ENCODE measurements at regions of chr1 and their contacts with region 1.

Region 1: GRCh38 chr1:171485375-171486047 is at the start of gene PRRC2C:
- DNase-seq: peak; percentile 88 to 99
- H3K4me3 ChIP-seq: peak within 1 kb of the TSS; percentile 75 to 91
- H3K27ac ChIP-seq: peak within 1 kb of the TSS; percentile 97 to 100
- H3K4me1 ChIP-seq: peaks cover 3 to 19% of the 10 kb centered on the region in 2 donors
- H3K27me3 ChIP-seq: no peaks in the 10 kb centered on the region
- CTCF ChIP-seq: peak in 2 of 3 experiments; percentile 83 to 89
- total RNA-seq, gene PRRC2C: 46.3 TPM

Region 2: DNA sequence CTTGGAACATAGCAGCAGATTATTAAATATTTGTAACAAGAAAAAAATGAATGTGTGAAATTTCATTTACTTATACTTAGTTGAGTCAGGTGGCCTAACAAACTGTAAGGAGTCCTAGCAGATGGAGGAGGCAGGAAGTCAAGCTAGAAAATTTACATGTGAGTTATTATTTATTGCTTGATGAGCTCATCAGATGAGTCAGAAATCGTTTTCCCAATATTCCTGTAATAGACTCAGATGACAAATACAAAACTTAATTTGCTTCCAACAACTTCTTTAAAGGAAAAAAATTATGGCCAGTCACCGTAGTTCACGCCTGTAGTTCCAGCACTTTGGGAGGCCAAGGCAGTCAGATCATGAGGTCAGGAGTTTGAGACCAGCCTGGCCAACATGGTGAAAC is 44.2 kb before region 1 on chr1:
- intact Hi-C with region 1: loop called (anchors 2 kb)
- DNase-seq: no peak
- H3K4me3 ChIP-seq: no peak overlapping the region
- H3K27ac ChIP-seq: peak overlapping the region in 1 of 2 donors; percentile 55
- H3K4me1 ChIP-seq: peaks cover 0 to 9% of the 10 kb centered on the region in 2 donors
- H3K27me3 ChIP-seq: no peaks in the 10 kb centered on the region
- CTCF ChIP-seq: no peak

Measured in ascending aorta (tissue), 2 donors.